ENCODE measurements at regions of chr10 and their contacts with region 1.

Region 1: GRCh38 chr10:51074238-51075028 is at the start of gene PRKG1:
- DNase-seq: peak; percentile 75
- H3K4me3 ChIP-seq: peak within 1 kb of the TSS; percentile 44 to 56
- H3K27ac ChIP-seq: peak within 1 kb of the TSS; percentile 70 to 78
- H3K4me1 ChIP-seq: no peaks in the 10 kb centered on the region
- H3K27me3 ChIP-seq: no peaks in the 10 kb centered on the region
- CTCF ChIP-seq: no peak
- POLR2A ChIP-seq: no peak
- total RNA-seq, gene PRKG1: 2.7 to 9.0 TPM

Region 2: DNA sequence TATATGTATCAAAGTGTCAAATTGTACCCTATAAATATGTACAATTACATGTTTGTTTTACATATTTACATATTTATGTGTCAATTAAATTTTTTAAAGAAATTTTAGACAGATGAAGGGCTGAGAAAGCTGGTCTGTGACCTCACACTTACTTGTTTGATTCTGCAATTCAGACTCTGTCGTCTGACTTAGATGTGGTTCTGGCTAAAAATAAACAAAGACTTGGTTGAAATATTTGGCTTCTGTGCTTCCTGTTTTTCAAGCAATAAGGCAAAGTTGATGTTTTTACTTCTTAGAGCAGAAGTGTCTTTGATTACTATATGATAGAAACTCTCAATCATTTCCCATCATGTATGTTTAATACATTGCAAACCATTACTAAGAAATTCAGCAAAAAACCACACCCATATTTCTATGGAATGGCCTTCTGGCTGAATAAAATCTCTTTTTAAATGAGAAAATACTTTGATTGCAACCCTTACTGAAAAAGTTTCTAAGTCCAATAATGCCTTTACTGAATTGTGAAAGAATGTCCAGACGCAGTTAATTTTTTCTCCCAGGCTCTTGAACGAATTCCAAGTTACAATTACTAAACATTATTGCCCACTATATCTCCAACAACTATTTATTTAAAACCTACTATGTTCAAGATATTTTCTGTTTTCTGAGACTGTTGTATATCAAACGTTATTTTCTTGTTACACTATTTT is 59.6 kb before region 1 on chr10:
- intact Hi-C with region 1: no loop called
- DNase-seq: no peak
- H3K4me3 ChIP-seq: no peak overlapping the region
- H3K27ac ChIP-seq: no peak overlapping the region
- H3K4me1 ChIP-seq: no peaks in the 10 kb centered on the region
- H3K27me3 ChIP-seq: no peaks in the 10 kb centered on the region
- CTCF ChIP-seq: no peak
- POLR2A ChIP-seq: no peak

Region 3: GRCh38 chr10:51109801-51110533 is 35.5 kb after region 1 on chr10:
- intact Hi-C with region 1: no loop called
- DNase-seq: no peak
- H3K4me3 ChIP-seq: no peak overlapping the region
- H3K27ac ChIP-seq: no peak overlapping the region
- H3K4me1 ChIP-seq: no peaks in the 10 kb centered on the region
- H3K27me3 ChIP-seq: no peaks in the 10 kb centered on the region
- CTCF ChIP-seq: no peak
- POLR2A ChIP-seq: no peak

Region 4: DNA sequence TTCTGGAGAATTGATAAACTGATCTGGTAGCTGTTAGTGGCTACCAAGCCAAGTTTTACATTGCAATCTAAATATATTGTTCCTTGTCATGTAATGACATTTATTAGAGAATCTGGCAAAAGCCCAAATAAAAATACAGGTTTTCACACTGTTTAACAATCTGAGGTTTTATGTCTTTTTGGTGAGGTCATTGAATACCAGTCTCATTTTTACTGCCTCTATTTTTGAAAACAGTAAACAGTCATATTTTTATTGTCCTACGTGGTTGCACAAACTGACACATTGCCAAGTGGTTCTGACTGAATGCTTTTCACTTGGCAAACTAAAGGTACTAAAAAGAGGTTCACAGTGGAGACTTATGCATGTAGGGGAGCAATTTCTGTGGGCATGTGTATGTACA is 157.3 kb after region 1 on chr10:
- intact Hi-C with region 1: loop called (anchors 10 kb)
- DNase-seq: peak; percentile 15
- H3K4me3 ChIP-seq: no peak overlapping the region
- H3K27ac ChIP-seq: no peak overlapping the region
- H3K4me1 ChIP-seq: no peaks in the 10 kb centered on the region
- H3K27me3 ChIP-seq: no peaks in the 10 kb centered on the region
- CTCF ChIP-seq: no peak
- POLR2A ChIP-seq: no peak

Region 5: GRCh38 chr10:51301644-51302043 is 227.2 kb after region 1 on chr10:
- intact Hi-C with region 1: loop called (anchors 10 kb)
- DNase-seq: no peak
- H3K4me3 ChIP-seq: no peak overlapping the region
- H3K27ac ChIP-seq: no peak overlapping the region
- H3K4me1 ChIP-seq: no peaks in the 10 kb centered on the region
- H3K27me3 ChIP-seq: no peaks in the 10 kb centered on the region
- CTCF ChIP-seq: no peak
- POLR2A ChIP-seq: no peak

Region 6: GRCh38 chr10:51422311-51423120 is 348.1 kb after region 1 on chr10:
- intact Hi-C with region 1: loop called (anchors 5 kb)
- DNase-seq: peak; percentile 33
- H3K4me3 ChIP-seq: no peak overlapping the region
- H3K27ac ChIP-seq: no peak overlapping the region
- H3K4me1 ChIP-seq: no peaks in the 10 kb centered on the region
- H3K27me3 ChIP-seq: no peaks in the 10 kb centered on the region
- CTCF ChIP-seq: peak; percentile 37 to 72 (median 66)
- POLR2A ChIP-seq: no peak

Region 7: DNA sequence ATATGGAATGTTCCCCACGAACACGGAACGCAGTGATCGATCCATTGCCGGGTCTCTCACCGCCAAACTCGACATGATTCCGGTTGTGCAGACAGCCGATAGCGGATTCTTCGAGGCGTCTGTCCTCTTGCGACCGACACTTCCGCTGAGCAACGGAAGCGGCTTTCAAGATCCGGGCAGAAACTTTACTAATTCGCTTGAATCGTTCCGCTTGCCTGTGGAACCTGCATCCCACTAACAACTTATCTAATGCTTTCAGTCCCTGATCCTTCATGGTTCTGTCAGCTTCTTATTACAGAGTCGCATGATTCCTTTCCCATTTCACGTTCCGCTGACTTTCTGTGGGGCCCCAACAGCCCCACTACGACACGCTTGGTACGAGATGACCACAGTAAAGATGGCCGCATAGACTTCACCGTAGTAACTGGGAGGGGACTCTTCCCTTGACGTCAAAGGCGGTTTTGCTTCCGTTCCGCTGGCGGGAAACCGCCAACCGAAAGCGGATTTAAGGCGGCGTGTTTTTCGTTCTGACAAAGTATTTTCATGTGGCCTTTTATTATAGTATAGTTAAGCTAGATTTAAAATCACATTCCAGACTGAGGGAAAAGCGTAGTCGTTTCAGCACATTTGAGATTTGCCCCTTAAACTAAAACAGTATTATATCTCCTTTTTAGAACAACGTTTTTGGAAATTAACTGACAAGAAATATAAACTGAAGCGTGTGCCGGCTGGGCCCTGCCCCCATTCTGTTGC is 625.2 kb after region 1 on chr10 and contains the start of gene CSTF2T:
- intact Hi-C with region 1: loop called (anchors 10 kb)
- DNase-seq: peak; percentile 89
- H3K4me3 ChIP-seq: peak within 1 kb of the TSS; percentile 67 to 78
- H3K27ac ChIP-seq: peak within 1 kb of the TSS; percentile 94 to 96
- H3K4me1 ChIP-seq: peaks cover 12% of the 10 kb centered on the region
- H3K27me3 ChIP-seq: no peaks in the 10 kb centered on the region
- CTCF ChIP-seq: no peak
- POLR2A ChIP-seq: peak; percentile 17
- total RNA-seq, gene CSTF2T: 20.9 to 22.4 TPM

Region 8: GRCh38 chr10:52215745-52216361 is 1141.4 kb after region 1 on chr10:
- intact Hi-C with region 1: loop called (anchors 5 kb)
- DNase-seq: peak; percentile 37
- H3K4me3 ChIP-seq: no peak overlapping the region
- H3K27ac ChIP-seq: no peak overlapping the region
- H3K4me1 ChIP-seq: no peaks in the 10 kb centered on the region
- H3K27me3 ChIP-seq: no peaks in the 10 kb centered on the region
- CTCF ChIP-seq: peak in 3 of 4 experiments; percentile 64 to 78 (median 70)
- POLR2A ChIP-seq: no peak

Measured in prostate gland (tissue), 2 donors.